SK-N-SH (cell line): ENCODE measurements at regions of chrX and their contacts with region 1.

Region 1: GRCh38 chrX:120603707-120604360 is at the start of gene MCTS1:
- DNase-seq: peak; percentile 67
- H3K4me3 ChIP-seq: peak within 1 kb of the TSS; percentile 85 to 91
- H3K27ac ChIP-seq: peak within 1 kb of the TSS; percentile 93 to 95
- H3K4me1 ChIP-seq: peaks cover 0 to 2% of the 10 kb centered on the region in 2 experiments; a peak in 2 of 4 replicates
- H3K27me3 ChIP-seq: no peaks in the 10 kb centered on the region; the same call in 1 of the 2 replicates
- CTCF ChIP-seq: no peak
- EP300 ChIP-seq: peak in 1 of 2 experiments; percentile 2; a peak in 1 of 4 replicates
- RAD21 ChIP-seq: no peak
- polyA plus RNA-seq, gene MCTS1: 62.1 and 78.7 TPM in 2 replicates

Region 2: GRCh38 chrX:120560842-120561633 is 42.8 kb before region 1 on chrX and contains the start of gene CUL4B:
- CTCF ChIA-PET with region 1: interaction called, 3 read pairs
- POLR2A ChIA-PET with region 1: interaction called, 43 read pairs
- DNase-seq: peak; percentile 88
- H3K4me3 ChIP-seq: peak within 1 kb of the TSS; percentile 77 to 78
- H3K27ac ChIP-seq: peak within 1 kb of the TSS; percentile 96
- H3K4me1 ChIP-seq: peaks cover 0 to 4% of the 10 kb centered on the region in 2 experiments; a peak in 2 of 4 replicates
- H3K27me3 ChIP-seq: no peaks in the 10 kb centered on the region
- CTCF ChIP-seq: no peak
- EP300 ChIP-seq: peak in 1 of 2 experiments; percentile 38; a peak in 1 of 4 replicates
- RAD21 ChIP-seq: no peak
- polyA plus RNA-seq, gene CUL4B: 24.1 and 42.6 TPM in 2 replicates